ENCODE measurements at regions of chr16 and their contacts with region 1.

Region 1: GRCh38 chr16:684067-684794 is at the start of gene JMJD8:
- DNase-seq: peak; percentile 91 to 98 (median 92)
- ATAC-seq: peak; percentile 67 to 74
- H3K4me3 Mint-ChIP-seq: peak within 1 kb of the TSS; percentile 60 to 86 (median 76)
- H3K27ac Mint-ChIP-seq: peak within 1 kb of the TSS in 8 of 10 donors; percentile 52 to 93 (median 80)
- H3K4me1 Mint-ChIP-seq: peaks cover 5 to 46% (median 34%) of the 10 kb centered on the region in 4 donors
- H3K27me3 Mint-ChIP-seq: no peaks in the 10 kb centered on the region
- polyA plus RNA-seq, gene JMJD8: 31.7 to 62.8 (median 46.0) TPM

Region 2: DNA sequence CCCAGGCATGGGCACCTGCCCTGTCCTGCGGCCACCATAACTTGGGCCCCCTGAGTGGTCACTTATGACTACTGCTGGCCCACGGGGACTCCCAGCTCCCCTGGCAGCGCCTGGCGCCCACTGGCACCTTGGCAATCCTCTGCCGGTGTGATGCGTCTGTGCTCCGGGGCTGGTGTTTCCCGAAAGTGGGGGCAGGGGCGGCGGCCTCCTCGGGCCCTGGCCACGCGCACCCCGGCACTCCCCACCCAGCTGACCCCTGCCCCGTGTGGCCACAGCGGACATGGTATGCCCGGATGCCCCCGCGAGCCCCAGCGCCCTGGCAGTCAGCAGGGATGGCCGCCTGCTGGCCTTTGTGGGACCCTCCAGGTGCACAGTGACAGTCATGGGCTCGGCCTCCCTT is 26.7 kb before region 1 on chr16:
- POLR2A ChIA-PET with region 1: no interaction called
- DNase-seq: no peak
- ATAC-seq: no peak
- H3K4me3 Mint-ChIP-seq: no peak overlapping the region
- H3K27ac Mint-ChIP-seq: no peak overlapping the region
- H3K4me1 Mint-ChIP-seq: peaks cover 2 to 7% (median 5%) of the 10 kb centered on the region in 4 donors
- H3K27me3 Mint-ChIP-seq: no peaks in the 10 kb centered on the region

Region 3: DNA sequence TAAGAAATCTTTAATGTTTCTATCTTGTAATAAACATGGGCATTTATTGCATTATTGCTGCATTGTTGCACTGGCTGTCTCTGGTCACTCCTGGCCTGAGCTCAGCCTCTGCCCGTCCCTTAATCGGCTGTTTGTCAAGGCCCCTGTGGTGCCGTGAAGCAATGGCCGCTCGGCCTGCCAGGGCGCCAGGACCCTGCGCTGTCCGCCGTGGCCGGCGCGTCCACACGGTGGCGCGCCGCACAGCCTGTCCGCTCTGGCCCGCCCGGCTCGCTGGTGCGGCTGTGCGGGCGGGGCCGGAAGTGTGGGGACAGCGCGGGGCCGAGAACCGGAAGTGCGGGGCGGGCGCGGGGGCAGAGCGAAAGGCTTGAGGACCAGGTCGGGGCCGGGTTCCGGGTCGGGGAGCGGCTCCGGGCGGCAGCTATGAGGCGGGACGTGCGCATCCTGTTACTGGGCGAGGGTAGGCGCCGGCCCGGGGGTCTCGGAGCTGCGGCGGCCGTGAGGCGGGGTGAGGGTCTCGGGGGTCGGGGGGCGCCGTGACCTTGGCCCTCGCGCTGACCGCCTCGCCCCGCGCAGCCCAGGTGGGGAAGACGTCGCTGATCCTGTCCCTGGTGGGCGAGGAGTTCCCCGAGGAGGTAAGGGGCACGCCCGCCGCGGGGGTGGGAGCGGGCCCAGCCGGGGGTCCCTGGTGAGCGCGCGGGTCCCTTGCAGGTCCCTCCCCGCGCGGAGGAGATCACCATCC is 16.3 kb before region 1 on chr16 and contains the start of gene RHOT2:
- POLR2A ChIA-PET with region 1: interaction called, 95 read pairs
- DNase-seq: peak; percentile 79 to 92 (median 86)
- ATAC-seq: peak; percentile 88 to 94
- H3K4me3 Mint-ChIP-seq: peak within 1 kb of the TSS; percentile 65 to 87 (median 80)
- H3K27ac Mint-ChIP-seq: peak within 1 kb of the TSS in 9 of 10 donors; percentile 79 to 96 (median 87)
- H3K4me1 Mint-ChIP-seq: peaks cover 0 to 17% (median 11%) of the 10 kb centered on the region in 4 donors
- H3K27me3 Mint-ChIP-seq: no peaks in the 10 kb centered on the region
- polyA plus RNA-seq, gene RHOT2: 25.1 to 44.8 (median 31.8) TPM